BJ (cell line): ENCODE measurements at regions of chr7 and their contacts with region 1.

Region 1: DNA sequence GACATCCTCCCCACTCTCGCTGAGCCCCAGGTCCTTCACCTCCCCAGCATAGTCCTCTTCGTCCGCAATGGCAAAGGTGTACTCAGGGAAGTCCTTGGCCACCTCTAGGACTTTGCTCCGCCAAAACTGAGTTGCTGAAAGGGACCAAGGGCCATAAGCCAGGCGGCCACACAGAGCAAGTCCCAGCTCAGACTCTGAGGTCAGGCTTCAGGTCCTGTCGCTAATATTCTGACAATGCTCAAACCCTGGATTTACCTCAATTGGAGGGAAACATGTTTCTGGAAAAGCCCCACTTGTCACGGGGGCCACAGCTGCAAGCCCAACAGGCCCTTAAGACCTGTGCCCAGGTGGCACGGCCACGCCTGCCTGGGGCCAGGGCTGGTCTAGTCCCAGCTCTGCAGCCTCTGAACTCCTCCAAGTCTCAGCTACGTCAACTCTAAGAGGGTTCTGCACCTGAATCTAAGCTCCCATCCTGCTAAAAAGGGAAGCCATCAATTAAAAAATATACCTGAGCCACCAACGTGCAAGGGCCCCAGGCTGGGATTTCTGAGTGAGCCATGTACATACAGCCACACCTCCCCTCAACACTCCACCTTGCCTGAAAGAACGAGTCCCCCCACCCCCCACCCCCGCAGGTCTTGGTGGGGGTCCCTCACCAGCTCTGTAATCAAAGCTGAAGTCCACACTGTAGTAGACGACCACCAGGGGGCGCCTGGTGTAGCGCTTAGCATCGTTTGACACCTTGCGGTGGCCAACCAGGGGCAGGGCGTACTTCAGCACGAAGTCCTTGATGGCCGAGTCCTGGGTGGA is 22.9 kb downstream of the PDIA4 start:
- DNase-seq: no peak
- H3K4me3 ChIP-seq: no peak overlapping the region
- H3K27me3 ChIP-seq: no peaks in the 10 kb centered on the region
- CTCF ChIP-seq: peak; percentile 85

Region 2: GRCh38 chr7:148987010-148987750 is 18.3 kb before region 1 on chr7:
- CTCF ChIA-PET with region 1: interaction called, 12 read pairs
- POLR2A ChIA-PET with region 1: no interaction called
- DNase-seq: peak; percentile 50
- H3K4me3 ChIP-seq: peak overlapping the region; percentile 69
- H3K27me3 ChIP-seq: peaks cover 2% of the 10 kb centered on the region; the same call in 1 of the 2 replicates
- CTCF ChIP-seq: no peak

Region 3: DNA sequence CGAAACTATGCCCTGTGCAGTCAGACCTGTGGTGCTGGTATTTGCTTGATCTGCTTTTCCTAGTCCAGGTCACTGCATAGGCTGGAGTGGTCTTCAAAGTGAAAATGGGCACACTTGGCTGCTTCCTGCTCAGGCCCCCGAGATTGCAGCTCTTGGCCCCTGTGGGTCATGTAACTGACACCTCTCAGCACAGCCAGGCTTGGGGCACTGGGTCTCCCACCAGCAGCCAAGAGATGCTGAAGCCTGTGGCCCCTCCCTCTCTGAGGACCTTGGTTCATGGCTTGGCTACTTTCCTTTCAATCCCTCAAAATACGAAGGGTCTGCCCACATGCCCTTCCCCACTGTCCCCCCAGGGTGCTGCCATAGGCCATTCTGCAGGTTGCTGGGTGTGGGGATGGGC is 10.8 kb before region 1 on chr7:
- CTCF ChIA-PET with region 1: interaction called, 17 read pairs
- POLR2A ChIA-PET with region 1: no interaction called
- DNase-seq: no peak
- H3K4me3 ChIP-seq: no peak overlapping the region
- H3K27me3 ChIP-seq: no peaks in the 10 kb centered on the region
- CTCF ChIP-seq: no peak

Region 4: DNA sequence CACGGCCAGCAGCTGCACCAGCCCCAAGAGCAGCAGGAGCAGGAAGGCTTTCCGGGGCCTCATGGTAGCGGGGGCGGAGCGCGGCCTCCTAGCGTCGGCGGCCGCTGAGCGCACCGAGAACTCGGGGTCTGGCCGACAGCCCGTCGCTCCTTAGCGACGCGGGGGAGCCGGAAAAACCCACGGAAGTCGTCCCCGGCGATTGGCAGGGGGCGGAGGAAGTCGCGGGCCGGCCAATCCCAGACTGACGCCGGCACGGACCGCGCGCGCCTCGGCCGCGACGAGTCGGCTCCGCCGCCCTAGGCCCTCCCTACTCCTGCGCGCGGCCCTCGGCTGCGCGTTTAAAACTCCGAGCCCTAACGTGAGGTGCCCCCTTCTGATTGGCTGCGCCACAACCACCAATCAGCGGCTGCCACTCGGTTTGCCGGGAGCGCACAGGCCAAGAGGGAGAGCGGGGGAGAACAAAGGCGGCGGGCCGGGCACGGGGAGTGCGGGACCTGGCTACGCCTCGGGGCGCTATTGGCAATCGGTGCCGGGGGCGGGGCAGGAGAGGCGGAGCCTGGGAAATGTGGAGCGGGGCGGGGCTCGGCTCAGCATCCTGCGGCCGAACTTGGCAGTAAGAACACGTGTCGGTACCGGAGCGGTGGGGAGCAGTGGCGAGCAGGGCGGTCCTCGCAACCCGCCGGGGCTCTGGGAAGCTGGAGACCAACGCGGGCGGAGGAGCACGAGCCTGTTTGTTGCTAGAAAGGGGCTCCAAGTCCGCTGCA is 23.1 kb after region 1 on chr7 and contains the start of gene PDIA4:
- CTCF ChIA-PET with region 1: interaction called, 10 read pairs
- POLR2A ChIA-PET with region 1: interaction called, 4 read pairs
- DNase-seq: peak; percentile 97
- H3K4me3 ChIP-seq: peak within 1 kb of the TSS; percentile 91
- H3K27me3 ChIP-seq: no peaks in the 10 kb centered on the region
- CTCF ChIP-seq: peak; percentile 37
- polyA plus RNA-seq, gene PDIA4: 173 and 204 TPM in 2 replicates

Region 5: GRCh38 chr7:149067876-149068275 is 62.4 kb after region 1 on chr7:
- CTCF ChIA-PET with region 1: interaction called, 59 read pairs
- POLR2A ChIA-PET with region 1: no interaction called
- DNase-seq: no peak
- H3K4me3 ChIP-seq: no peak overlapping the region
- H3K27me3 ChIP-seq: no peaks in the 10 kb centered on the region
- CTCF ChIP-seq: no peak